ENCODE measurements at regions of chr3 and their contacts with region 1.

Region 1: DNA sequence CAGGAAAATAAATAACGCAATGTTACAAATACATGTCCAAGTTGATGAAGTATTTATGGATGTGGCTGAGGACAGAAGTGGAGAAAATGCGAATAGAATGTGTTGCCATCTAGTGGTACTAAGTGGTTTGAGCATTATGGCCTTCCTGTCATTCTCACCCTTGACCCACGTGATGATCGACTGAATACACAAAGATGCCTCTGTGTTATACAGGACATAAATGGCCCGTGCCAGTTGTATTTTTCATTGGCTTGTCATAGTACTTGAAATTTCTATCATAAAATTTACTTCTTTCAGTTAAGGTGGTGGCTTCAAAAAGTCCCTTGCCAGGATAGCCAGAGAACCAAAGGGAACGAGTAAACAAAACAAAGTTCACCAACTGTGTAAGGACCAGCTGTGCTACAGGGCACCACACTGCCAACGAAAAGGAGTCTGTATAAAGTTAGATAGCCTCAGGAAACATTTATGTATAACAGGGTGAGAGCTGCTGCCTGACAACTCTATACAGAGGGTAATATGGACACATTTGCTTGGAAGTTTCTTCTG is 103.7 kb downstream of the MYH15 start:
- DNase-seq: peak; percentile 37 to 70
- H3K4me3 ChIP-seq: no peak overlapping the region
- H3K27ac ChIP-seq: no peak overlapping the region
- H3K4me1 ChIP-seq: peaks cover 7% of the 10 kb centered on the region
- H3K27me3 ChIP-seq: no peaks in the 10 kb centered on the region
- CTCF ChIP-seq: peak; percentile 93

Region 2: DNA sequence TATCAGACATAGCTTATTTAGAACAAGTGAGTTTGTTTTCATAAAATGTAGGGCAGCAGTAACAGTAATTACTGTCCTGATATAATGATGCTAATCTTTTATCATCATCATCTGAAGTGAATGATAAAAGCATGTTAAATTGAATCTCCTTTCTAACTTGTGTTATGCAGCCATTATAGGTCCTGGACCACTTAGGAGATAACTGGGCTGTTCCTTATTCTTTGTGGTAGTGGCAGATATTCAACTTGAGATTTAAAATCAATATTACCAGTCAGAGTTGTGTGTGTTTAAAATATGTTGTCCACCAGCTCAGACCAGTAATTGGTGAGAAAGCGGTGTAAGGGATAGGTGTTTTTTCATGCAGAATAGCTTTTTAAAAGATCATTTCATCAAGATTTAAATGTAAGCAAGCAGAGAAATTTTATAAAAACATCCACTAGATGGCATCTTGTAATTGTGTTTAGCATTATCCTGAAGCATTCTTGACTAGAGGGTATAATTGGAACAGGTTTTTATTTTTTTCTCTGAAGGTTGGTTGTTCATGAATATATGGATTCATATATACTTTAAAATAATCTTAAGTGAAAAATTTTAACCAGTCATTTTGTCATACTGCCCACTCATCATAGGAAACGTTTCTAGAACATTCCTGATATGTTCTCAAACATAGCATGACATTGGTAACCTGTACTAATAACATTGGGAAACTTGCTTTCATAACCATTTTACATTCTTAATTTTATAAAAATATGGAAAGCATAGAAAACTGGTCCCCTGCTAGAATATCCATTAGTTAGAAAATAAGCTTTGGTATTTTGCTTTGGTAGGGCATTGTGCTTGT is 730.0 kb before region 1 on chr3:
- CTCF ChIA-PET with region 1: no interaction called
- POLR2A ChIA-PET with region 1: no interaction called
- intact Hi-C with region 1: loop called (anchors 5 kb)
- DNase-seq: peak in 1 of 2 experiments; percentile 57
- H3K4me3 ChIP-seq: no peak overlapping the region
- H3K27ac ChIP-seq: no peak overlapping the region
- H3K4me1 ChIP-seq: no peaks in the 10 kb centered on the region
- H3K27me3 ChIP-seq: no peaks in the 10 kb centered on the region
- CTCF ChIP-seq: peak; percentile 86

Region 3: GRCh38 chr3:107846279-107846852 is 560.4 kb before region 1 on chr3:
- CTCF ChIA-PET with region 1: no interaction called
- POLR2A ChIA-PET with region 1: no interaction called
- intact Hi-C with region 1: loop called (anchors 5 kb)
- DNase-seq: peak in 1 of 2 experiments; percentile 59
- H3K4me3 ChIP-seq: no peak overlapping the region
- H3K27ac ChIP-seq: no peak overlapping the region
- H3K4me1 ChIP-seq: peaks cover 7% of the 10 kb centered on the region; the same call in 1 of the 2 replicates
- H3K27me3 ChIP-seq: no peaks in the 10 kb centered on the region
- CTCF ChIP-seq: peak; percentile 76

Region 4: DNA sequence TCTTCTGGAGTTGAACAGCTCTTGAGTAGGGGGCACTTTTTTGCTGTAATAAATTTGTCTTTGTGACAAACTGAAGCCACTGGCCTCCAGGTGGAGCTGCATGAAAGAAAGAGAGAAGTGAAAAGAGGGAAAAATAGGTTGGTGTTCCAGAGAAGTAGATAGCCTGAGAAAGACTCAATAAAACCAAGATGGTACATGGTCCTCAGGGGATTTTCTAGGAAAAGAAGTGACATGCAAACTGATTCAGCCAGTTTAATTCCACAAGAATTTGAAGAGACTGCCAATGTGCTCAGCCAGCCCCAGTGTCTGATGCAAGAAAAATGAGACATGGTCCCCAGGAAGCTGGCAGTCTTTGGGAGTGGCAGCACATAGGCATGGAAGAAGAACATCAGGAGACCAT is 468.6 kb before region 1 on chr3:
- CTCF ChIA-PET with region 1: no interaction called
- POLR2A ChIA-PET with region 1: no interaction called
- intact Hi-C with region 1: loop called (anchors 1 kb)
- DNase-seq: peak; percentile 48 to 58
- H3K4me3 ChIP-seq: no peak overlapping the region
- H3K27ac ChIP-seq: no peak overlapping the region
- H3K4me1 ChIP-seq: no peaks in the 10 kb centered on the region
- H3K27me3 ChIP-seq: no peaks in the 10 kb centered on the region
- CTCF ChIP-seq: peak; percentile 89

Region 5: GRCh38 chr3:108006077-108006771 is 400.5 kb before region 1 on chr3:
- CTCF ChIA-PET with region 1: no interaction called
- POLR2A ChIA-PET with region 1: no interaction called
- intact Hi-C with region 1: loop called (anchors 5 kb)
- DNase-seq: peak; percentile 86 to 92
- H3K4me3 ChIP-seq: peak overlapping the region; percentile 15; the same call in 1 of the 2 replicates
- H3K27ac ChIP-seq: peak overlapping the region; percentile 19; the same call in 1 of the 2 replicates
- H3K4me1 ChIP-seq: peaks cover 42% of the 10 kb centered on the region
- H3K27me3 ChIP-seq: no peaks in the 10 kb centered on the region
- CTCF ChIP-seq: no peak

Region 6: GRCh38 chr3:108153451-108153981 is 253.2 kb before region 1 on chr3:
- CTCF ChIA-PET with region 1: interaction called, 6 read pairs
- POLR2A ChIA-PET with region 1: no interaction called
- intact Hi-C with region 1: loop called (anchors 5 kb)
- DNase-seq: peak; percentile 54 to 75
- H3K4me3 ChIP-seq: no peak overlapping the region
- H3K27ac ChIP-seq: no peak overlapping the region
- H3K4me1 ChIP-seq: no peaks in the 10 kb centered on the region; the same call in 1 of the 2 replicates
- H3K27me3 ChIP-seq: no peaks in the 10 kb centered on the region
- CTCF ChIP-seq: peak; percentile 59

Region 7: DNA sequence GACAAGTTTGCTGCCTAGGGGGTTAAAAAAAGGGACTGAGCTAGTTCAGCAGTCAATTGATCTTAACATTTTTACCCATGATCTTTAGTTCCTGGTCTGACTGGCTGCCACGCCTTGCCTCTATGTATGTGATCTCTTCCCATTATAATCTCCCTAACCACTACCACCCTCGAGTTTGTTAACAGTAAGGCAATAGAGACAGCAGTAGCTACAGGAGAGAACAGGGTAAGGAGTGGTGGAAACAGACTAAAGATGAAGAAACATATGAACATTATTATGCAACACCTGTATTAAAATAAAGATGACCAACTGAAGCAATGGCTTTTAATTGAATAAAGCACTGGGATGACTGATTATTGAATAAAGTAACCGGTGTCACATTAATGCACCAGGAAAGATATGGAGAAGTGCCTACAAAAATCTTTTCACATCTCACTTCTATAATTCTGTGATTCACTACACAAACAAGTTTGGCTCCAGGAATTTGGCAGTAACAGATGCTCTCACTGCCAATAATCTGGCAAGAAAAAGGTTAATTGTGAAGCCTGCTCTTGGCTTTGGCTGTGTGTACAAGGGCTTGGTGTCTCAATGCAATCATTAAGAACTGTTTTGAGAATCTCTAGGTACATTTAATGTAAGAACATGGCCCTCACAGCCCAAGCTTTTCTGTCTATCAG is 14.7 kb before region 1 on chr3:
- CTCF ChIA-PET with region 1: no interaction called
- POLR2A ChIA-PET with region 1: no interaction called
- intact Hi-C with region 1: no loop called
- DNase-seq: peak in 1 of 2 experiments; percentile 49
- H3K4me3 ChIP-seq: no peak overlapping the region
- H3K27ac ChIP-seq: no peak overlapping the region
- H3K4me1 ChIP-seq: 0 out of 2 replicates have a peak, but pooled peaks cover 4% of the 10 kb centered on the region
- H3K27me3 ChIP-seq: no peaks in the 10 kb centered on the region
- CTCF ChIP-seq: no peak

Region 8: GRCh38 chr3:108477511-108478147 is 70.9 kb after region 1 on chr3:
- CTCF ChIA-PET with region 1: interaction called, 3 read pairs
- POLR2A ChIA-PET with region 1: no interaction called
- intact Hi-C with region 1: loop called (anchors 5 kb)
- DNase-seq: peak; percentile 49 to 58
- H3K4me3 ChIP-seq: no peak overlapping the region
- H3K27ac ChIP-seq: no peak overlapping the region
- H3K4me1 ChIP-seq: peaks cover 24% of the 10 kb centered on the region
- H3K27me3 ChIP-seq: no peaks in the 10 kb centered on the region
- CTCF ChIP-seq: peak; percentile 96

Measured in PC-9 (cell line).